ENCODE measurements at regions of chr1 and their contacts with region 1.

Region 1: DNA sequence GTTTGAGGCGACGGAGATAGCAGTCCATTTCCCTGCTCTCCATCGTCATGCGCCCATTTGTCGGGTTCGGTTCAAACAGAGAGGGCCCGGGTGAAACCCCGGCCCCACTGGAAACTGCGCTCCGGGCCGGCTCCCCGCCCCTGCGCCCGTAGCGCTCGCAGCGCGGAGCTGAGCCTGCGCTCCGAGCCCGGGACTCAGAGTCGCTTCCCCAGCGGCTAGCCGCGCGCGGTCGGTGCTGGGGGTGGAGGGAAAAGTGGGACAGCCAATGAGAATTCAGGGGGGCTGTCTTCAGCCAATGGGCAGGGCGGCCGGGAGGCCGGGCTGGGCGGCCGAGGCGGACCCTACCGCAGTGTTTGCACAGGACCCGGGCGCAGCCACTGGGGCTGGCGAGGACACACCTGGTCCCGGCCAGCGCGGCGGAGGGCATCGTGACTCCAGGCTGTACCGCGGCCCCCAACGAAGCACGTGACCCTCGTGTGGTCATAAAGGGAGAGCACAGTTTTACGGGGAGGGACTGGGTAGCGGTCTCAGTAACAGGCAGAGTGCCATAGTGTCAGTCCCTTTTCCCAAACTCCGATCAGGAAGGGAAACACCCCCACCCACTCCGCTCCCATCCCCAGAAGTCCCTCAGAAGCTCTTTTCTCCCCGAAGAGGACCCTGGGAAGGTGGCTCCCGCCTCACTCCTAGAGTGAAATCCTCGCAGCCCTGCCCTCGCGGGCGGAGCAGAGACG is at the start of gene INKA2:
- DNase-seq: peak in 13 of 14 experiments; percentile 12 to 79 (median 53)
- ATAC-seq: peak; percentile 60
- H3K4me3 ChIP-seq: peak within 1 kb of the TSS; percentile 53
- H3K4me3 Mint-ChIP-seq: peak within 1 kb of the TSS; percentile 91
- H3K27ac ChIP-seq: no peak within 1 kb of the TSS
- H3K27ac Mint-ChIP-seq: no peak within 1 kb of the TSS
- H3K4me1 ChIP-seq: peaks cover 30% of the 10 kb centered on the region
- H3K4me1 Mint-ChIP-seq: peaks cover 21% of the 10 kb centered on the region
- H3K27me3 ChIP-seq: peaks cover 34 to 36% of the 10 kb centered on the region in 2 experiments
- H3K27me3 Mint-ChIP-seq: peaks cover 32% of the 10 kb centered on the region
- CTCF ChIP-seq: no peak
- total RNA-seq, gene INKA2: 0.27 TPM in 1 of 2 experiments, not detected in the other

Region 2: GRCh38 chr1:111582644-111583618 is 156.4 kb before region 1 on chr1:
- CTCF ChIA-PET with region 1: no interaction called
- POLR2A ChIA-PET with region 1: no interaction called
- intact Hi-C with region 1: no loop called
- DNase-seq: peak in 1 of 14 experiments; percentile 52
- ATAC-seq: no peak
- H3K4me3 ChIP-seq: no peak overlapping the region
- H3K4me3 Mint-ChIP-seq: no peak overlapping the region
- H3K27ac ChIP-seq: no peak overlapping the region
- H3K27ac Mint-ChIP-seq: no peak overlapping the region
- H3K4me1 ChIP-seq: peaks cover 4% of the 10 kb centered on the region
- H3K4me1 Mint-ChIP-seq: peaks cover 5% of the 10 kb centered on the region
- H3K27me3 ChIP-seq: no peaks in the 10 kb centered on the region
- H3K27me3 Mint-ChIP-seq: no peaks in the 10 kb centered on the region
- CTCF ChIP-seq: no peak

Region 3: DNA sequence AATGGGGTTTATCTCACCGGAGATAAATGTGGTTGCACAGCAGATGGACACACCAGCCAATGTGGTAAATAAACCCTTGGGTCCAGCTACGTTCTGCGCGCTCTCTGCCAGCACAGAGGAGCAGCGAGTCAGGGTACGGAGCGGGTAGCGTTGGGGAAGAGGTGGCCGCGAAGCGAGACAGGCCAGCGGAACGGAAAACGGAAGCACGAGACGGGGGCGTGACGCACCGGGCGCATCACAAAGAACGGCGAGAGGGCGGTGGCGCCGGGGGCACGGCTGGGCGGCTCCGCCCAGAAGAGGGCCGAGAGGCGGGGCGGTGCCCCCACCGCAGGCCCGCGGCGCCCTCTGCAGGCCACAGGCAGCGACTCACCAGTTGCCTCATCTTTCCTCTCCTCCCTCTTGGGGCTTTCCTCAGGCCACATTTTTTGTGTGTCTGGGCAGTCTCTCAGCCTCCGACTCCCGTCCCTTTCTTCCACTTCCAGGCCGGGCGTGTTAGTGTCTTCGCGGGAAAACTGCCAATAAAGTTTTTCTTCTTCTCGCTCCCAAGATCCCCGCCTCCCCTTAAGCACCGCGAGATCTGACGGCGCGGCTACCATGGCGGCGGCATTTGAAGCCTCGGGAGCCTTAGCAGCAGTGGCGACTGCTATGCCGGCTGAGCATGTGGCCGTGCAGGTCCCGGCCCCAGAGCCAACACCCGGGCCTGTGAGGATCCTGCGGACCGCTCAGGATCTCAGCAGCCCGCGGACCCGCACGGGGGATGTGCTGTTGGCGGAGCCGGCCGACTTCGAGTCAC is 16.2 kb after region 1 on chr1 and contains the start of gene DDX20:
- CTCF ChIA-PET with region 1: interaction called, 11 read pairs
- POLR2A ChIA-PET with region 1: interaction called, 21 read pairs
- intact Hi-C with region 1: loop called in 1 of 2 experiments (anchors 1 kb)
- DNase-seq: peak; percentile 87 to 97 (median 92)
- ATAC-seq: peak; percentile 85
- H3K4me3 ChIP-seq: peak within 1 kb of the TSS; percentile 89
- H3K4me3 Mint-ChIP-seq: peak within 1 kb of the TSS; percentile 89
- H3K27ac ChIP-seq: peak within 1 kb of the TSS; percentile 89 to 95
- H3K27ac Mint-ChIP-seq: peak within 1 kb of the TSS; percentile 96
- H3K4me1 ChIP-seq: peaks cover 24% of the 10 kb centered on the region
- H3K4me1 Mint-ChIP-seq: peaks cover 45% of the 10 kb centered on the region
- H3K27me3 ChIP-seq: no peaks in the 10 kb centered on the region
- H3K27me3 Mint-ChIP-seq: no peaks in the 10 kb centered on the region
- CTCF ChIP-seq: peak; percentile 89
- total RNA-seq, gene DDX20: 27.2 to 27.4 TPM

Region 4: GRCh38 chr1:111769517-111770146 is 30.3 kb after region 1 on chr1:
- CTCF ChIA-PET with region 1: interaction called, 20 read pairs
- POLR2A ChIA-PET with region 1: no interaction called
- intact Hi-C with region 1: no loop called
- DNase-seq: peak in 12 of 14 experiments; percentile 11 to 84 (median 42)
- ATAC-seq: peak; percentile 68
- H3K4me3 ChIP-seq: no peak overlapping the region
- H3K4me3 Mint-ChIP-seq: no peak overlapping the region
- H3K27ac ChIP-seq: no peak overlapping the region
- H3K27ac Mint-ChIP-seq: peak overlapping the region; percentile 40
- H3K4me1 ChIP-seq: no peaks in the 10 kb centered on the region
- H3K4me1 Mint-ChIP-seq: peaks cover 9% of the 10 kb centered on the region
- H3K27me3 ChIP-seq: no peaks in the 10 kb centered on the region
- H3K27me3 Mint-ChIP-seq: no peaks in the 10 kb centered on the region
- CTCF ChIP-seq: peak; percentile 82

Measured in CD4-positive, alpha-beta T cell (primary cell).